ENCODE measurements at regions of chr20 and their contacts with region 1.

Region 1: DNA sequence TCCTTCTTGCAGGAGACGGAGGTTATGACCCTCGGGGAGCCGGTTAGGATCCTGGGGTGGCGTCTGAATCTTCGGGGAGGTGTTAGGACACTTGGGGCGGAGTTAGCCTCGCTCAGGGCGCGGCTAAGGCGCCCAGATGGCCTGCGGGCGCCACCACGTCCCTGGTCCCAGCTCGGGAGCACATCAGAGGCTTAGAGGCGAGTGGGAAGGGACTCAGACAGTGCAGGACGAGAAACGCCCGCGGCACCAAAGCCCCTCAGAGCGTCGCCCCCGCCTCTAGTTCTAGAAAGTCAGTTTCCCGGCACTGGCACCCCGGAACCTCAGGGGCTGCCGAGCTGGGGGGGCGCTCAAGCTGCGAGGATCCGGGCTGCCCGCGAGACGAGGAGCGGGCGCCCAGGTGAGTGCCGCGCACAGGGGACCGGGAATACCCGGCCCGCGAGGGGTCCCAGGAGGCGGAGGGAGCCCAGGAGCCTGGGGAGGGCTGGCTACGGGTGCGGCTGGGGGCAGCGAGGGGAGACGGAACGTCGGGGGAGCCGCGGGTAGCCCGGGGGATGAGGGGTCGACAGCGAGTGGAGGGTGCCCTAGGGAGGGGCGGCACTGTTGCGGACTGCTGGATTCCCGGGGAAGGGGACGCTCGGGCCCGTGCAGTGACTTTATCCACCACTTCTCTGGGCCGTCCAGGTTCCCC is at the start of gene HCK:
- DNase-seq: peak; percentile 75
- CTCF ChIP-seq: no peak

Region 2: GRCh38 chr20:32040142-32041022 is 11.9 kb before region 1 on chr20:
- CTCF ChIA-PET with region 1: interaction called, 18 read pairs
- POLR2A ChIA-PET with region 1: no interaction called
- DNase-seq: peak; percentile 61
- CTCF ChIP-seq: no peak

Region 3: GRCh38 chr20:32062776-32063170 is 10.5 kb after region 1 on chr20:
- CTCF ChIA-PET with region 1: interaction called, 5 read pairs
- POLR2A ChIA-PET with region 1: interaction called, 22 read pairs
- DNase-seq: peak; percentile 54
- CTCF ChIP-seq: no peak